ENCODE measurements at regions of chr2 and their contacts with region 1.

Region 1: GRCh38 chr2:85266146-85267041 is 61.4 kb downstream of the TGOLN2 start:
- DNase-seq: peak; percentile 74
- H3K4me3 Mint-ChIP-seq: no peak overlapping the region
- H3K27ac Mint-ChIP-seq: no peak overlapping the region
- H3K4me1 Mint-ChIP-seq: no peaks in the 10 kb centered on the region
- H3K27me3 Mint-ChIP-seq: no peaks in the 10 kb centered on the region
- CTCF ChIP-seq: peak; percentile 92

Region 2: DNA sequence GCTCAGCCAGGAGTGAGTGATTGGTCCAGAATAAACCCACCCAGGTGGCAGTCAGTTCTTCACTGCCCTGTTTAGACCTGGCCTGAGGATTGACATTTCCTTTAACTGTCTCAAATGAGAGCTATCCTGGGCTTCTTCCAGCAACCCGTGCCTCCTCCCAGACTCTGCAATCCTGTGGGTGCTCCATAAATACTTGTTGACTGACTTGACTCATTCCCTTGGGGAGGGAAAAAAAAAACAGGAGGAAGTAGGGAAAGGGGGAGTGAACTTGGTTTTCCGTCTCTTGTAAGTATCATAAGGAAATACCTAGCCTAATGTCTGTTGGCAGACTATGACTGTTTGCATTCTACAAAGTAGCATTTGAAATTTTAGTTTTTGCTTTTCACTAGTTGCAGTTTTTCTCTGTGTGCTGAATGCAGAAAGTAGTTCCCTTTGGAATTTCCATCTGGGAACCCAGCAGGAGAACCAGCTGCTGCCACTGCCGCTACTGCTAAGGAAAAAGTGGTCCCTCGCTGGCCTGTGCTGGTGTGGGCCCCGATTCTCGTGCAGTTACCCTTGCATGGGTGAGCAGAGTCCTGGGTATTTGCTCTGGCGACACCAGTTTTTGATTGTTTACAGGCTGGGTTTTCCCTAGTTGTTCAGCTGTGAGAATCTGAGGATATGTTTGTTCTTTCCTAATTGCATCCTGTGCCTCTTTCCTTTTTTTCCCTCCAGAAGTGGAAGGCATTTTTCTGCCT is 17.5 kb before region 1 on chr2:
- CTCF ChIA-PET with region 1: interaction called, 37 read pairs
- POLR2A ChIA-PET with region 1: no interaction called
- intact Hi-C with region 1: no loop called
- DNase-seq: peak; percentile 76
- H3K4me3 Mint-ChIP-seq: no peak overlapping the region
- H3K27ac Mint-ChIP-seq: no peak overlapping the region
- H3K4me1 Mint-ChIP-seq: peaks cover 8% of the 10 kb centered on the region
- H3K27me3 Mint-ChIP-seq: no peaks in the 10 kb centered on the region
- CTCF ChIP-seq: no peak

Measured in MCF 10A (cell line).